GM10248 (cell line): ENCODE measurements at regions of chr20 and their contacts with region 1.

Region 1: DNA sequence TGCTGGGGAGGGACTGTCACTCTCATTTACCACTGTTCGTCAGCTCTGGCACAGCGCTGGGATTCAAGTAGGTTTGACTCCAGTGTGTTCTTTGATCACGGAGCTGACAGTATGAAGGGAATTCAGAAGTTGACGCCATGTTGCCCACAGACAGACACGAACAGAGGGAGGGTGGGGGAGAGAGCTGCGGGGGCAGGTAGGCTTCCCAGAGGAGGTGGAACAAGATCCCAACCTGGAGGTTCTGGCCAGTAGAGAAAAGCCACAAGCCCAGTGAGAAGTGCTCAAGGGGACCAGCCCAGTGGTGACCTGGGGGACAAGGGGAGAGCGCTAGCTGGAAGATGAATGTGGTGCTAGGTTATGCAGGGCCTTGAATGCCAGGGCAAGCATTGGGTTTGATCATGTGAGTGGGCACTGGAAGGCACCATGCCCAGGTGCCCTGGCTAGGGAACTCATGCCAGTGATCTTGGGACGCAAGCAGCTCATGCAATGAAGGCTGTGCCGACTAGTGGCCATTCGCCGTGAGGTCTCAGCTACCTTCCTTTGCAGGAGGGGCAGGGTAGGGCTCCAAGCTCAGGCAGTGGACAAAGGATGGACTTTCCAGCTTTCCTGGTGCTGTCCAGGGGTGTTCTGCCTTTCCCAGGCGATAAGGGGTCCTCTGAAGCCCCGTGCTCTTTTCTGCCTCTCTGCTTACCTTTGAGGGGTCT is 50.4 kb upstream of the APCDD1L start:
- DNase-seq: no peak
- CTCF ChIP-seq: no peak

Region 2: DNA sequence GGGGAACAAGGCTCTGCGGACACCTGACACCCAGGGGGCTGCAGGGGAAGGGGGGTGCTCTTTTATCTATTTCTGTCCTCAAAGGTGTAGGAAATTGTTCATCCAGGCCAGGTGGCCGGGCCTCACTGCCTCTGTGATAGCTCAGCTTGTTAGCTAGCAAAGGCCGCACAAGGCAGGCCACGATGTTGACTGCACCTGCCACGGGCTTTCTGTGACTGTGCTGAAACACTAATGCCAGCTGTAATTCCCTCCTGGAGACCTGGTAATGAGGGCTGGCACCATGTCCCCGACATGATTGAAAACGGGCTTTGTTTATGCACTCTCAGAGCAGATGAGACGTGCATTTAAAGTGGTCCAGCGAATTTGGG is 11.0 kb after region 1 on chr20:
- CTCF ChIA-PET with region 1: interaction called, 14 read pairs
- POLR2A ChIA-PET with region 1: no interaction called
- DNase-seq: no peak
- CTCF ChIP-seq: no peak